A549 (cell line): ENCODE measurements at regions of chr20 and their contacts with region 1.

Region 1: GRCh38 chr20:31260326-31260932 is 3.0 kb downstream of the DEFB115 start:
- DNase-seq: peak; percentile 22 to 44
- ATAC-seq: peak in 1 of 2 experiments; percentile 73; a peak in 3 of 6 replicates
- H3K4me3 ChIP-seq: no peak overlapping the region
- H3K27ac ChIP-seq: no peak overlapping the region
- H3K4me1 ChIP-seq: no peaks in the 10 kb centered on the region
- CTCF ChIP-seq: 0 out of 3 replicates have a peak, but pooled peaks have one; percentile 25
- EP300 ChIP-seq: no peak
- POLR2A ChIP-seq: no peak
- RAD21 ChIP-seq: peak; percentile 33 to 63; a peak in 3 of 5 replicates

Region 2: GRCh38 chr20:31274441-31274840 is 14.0 kb after region 1 on chr20:
- CTCF ChIA-PET with region 1: interaction called, 14 read pairs
- POLR2A ChIA-PET with region 1: no interaction called
- DNase-seq: no peak
- ATAC-seq: no peak
- H3K4me3 ChIP-seq: no peak overlapping the region
- H3K27ac ChIP-seq: no peak overlapping the region
- H3K4me1 ChIP-seq: no peaks in the 10 kb centered on the region
- CTCF ChIP-seq: no peak
- EP300 ChIP-seq: no peak
- POLR2A ChIP-seq: no peak
- RAD21 ChIP-seq: no peak